CD4-positive, alpha-beta memory T cell (primary cell): ENCODE measurements at regions of chr15 and their contacts with region 1.

Region 1: DNA sequence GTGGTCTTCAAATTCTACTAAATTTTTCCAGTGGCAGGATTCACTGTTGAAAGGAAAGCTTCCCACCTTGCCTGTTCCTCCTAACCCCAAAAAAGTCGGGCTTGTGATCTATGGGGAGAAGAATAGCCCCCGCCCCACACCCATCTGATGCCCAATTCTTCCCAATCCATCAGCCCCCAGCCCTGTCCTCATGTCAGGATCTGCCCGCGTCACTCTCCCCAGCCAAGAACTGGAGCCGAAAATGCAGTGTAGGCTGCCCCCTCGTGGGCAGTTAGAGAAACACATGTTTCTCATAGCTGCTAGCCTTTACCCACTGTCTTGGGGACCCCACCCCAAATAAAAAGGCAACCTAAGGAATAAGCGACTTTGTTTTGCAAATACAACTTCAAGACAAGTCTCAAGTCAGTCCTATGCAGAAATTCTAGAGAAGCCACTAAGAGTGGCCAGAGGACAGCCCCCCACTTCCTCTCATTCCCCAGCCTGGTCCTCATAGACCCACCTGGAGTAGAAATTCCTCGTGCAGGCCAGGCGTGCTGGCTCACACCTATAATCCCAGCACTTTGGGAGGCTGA is 13.0 kb upstream of the CSK start:
- DNase-seq: peak; percentile 60 to 67 (median 60)
- H3K4me3 ChIP-seq: no peak overlapping the region
- H3K4me3 Mint-ChIP-seq: peak overlapping the region in 2 of 8 donors; percentile 0 to 30
- H3K27ac ChIP-seq: no peak overlapping the region
- H3K27ac Mint-ChIP-seq: peak overlapping the region in 4 of 7 donors; percentile 7 to 81 (median 19)
- H3K4me1 ChIP-seq: peaks cover 22% of the 10 kb centered on the region
- H3K4me1 Mint-ChIP-seq: peaks cover 8 to 36% (median 16%) of the 10 kb centered on the region in 4 donors
- H3K27me3 ChIP-seq: no peaks in the 10 kb centered on the region
- H3K27me3 Mint-ChIP-seq: peaks cover 3 to 4% of the 10 kb centered on the region in 2 donors

Region 2: DNA sequence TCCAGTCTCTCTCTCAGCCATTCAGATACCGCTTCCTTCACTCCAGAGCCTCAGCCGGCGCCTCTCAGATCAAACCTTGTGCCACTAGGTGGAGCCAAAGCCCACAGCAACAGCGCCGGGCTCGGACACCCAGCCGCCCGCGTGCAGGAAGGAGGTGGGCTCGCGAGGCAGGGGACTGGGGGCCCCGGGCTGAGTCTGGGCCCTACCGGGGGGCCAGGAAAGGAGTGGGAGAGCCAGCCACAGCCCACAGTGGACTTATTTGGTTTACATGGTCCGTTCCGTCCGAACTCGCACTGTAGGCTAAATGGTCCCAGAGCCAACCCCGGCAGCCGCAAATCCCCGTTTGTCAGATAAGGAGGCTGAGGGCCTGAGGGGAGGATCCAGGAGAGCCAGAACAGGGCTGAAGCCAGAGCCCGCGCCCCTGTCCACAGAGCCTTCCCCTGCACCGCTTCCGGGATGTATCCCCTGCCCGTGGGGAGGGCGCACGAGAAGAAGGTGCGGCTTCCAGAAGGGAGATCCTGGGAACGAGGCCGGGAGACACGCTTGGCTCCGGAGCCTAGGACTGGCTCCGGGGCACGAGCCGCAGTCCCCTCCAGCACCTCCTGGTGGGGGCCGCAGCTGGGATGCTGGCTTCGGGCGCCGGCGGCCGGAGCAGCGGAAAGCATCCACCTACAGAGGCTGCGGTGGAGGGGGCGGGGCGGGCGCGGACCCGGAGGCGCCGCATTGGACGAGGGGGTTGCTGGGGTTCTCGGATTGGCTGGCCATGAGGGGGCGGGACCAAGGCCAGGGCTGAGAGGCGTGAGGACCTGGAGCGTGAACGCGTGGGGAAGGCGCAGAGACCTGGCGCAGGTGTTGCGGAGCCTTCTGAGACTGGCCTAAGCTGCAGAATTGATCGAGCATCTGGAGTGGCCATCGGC is 394.9 kb before region 1 on chr15:
- CTCF ChIA-PET with region 1: interaction called, 4 read pairs
- POLR2A ChIA-PET with region 1: interaction called, 3 read pairs
- intact Hi-C with region 1: loop called (anchors 1 kb)
- DNase-seq: peak; percentile 90 to 96 (median 91)
- H3K4me3 ChIP-seq: peak overlapping the region; percentile 82 to 93
- H3K4me3 Mint-ChIP-seq: peak overlapping the region; percentile 78 to 88 (median 86)
- H3K27ac ChIP-seq: peak overlapping the region; percentile 38
- H3K27ac Mint-ChIP-seq: peak overlapping the region; percentile 46 to 88 (median 67)
- H3K4me1 ChIP-seq: peaks cover 19% of the 10 kb centered on the region
- H3K4me1 Mint-ChIP-seq: peaks cover 6 to 24% (median 13%) of the 10 kb centered on the region in 4 donors
- H3K27me3 ChIP-seq: no peaks in the 10 kb centered on the region
- H3K27me3 Mint-ChIP-seq: peaks cover 8% of the 10 kb centered on the region in 2 donors

Region 3: GRCh38 chr15:74573987-74574386 is 194.9 kb before region 1 on chr15:
- CTCF ChIA-PET with region 1: no interaction called
- POLR2A ChIA-PET with region 1: no interaction called
- intact Hi-C with region 1: no loop called
- DNase-seq: no peak
- H3K4me3 ChIP-seq: no peak overlapping the region
- H3K4me3 Mint-ChIP-seq: no peak overlapping the region
- H3K27ac ChIP-seq: no peak overlapping the region
- H3K27ac Mint-ChIP-seq: peak overlapping the region in 3 of 7 donors; percentile 39 to 87 (median 57)
- H3K4me1 ChIP-seq: no peaks in the 10 kb centered on the region
- H3K4me1 Mint-ChIP-seq: peaks cover 0 to 8% (median 2%) of the 10 kb centered on the region in 4 donors
- H3K27me3 ChIP-seq: no peaks in the 10 kb centered on the region
- H3K27me3 Mint-ChIP-seq: no peaks in the 10 kb centered on the region

Region 4: GRCh38 chr15:74732846-74733245 is 36.0 kb before region 1 on chr15:
- CTCF ChIA-PET with region 1: no interaction called
- POLR2A ChIA-PET with region 1: no interaction called
- intact Hi-C with region 1: no loop called
- DNase-seq: no peak
- H3K4me3 ChIP-seq: no peak overlapping the region
- H3K4me3 Mint-ChIP-seq: no peak overlapping the region
- H3K27ac ChIP-seq: no peak overlapping the region
- H3K27ac Mint-ChIP-seq: no peak overlapping the region
- H3K4me1 ChIP-seq: no peaks in the 10 kb centered on the region
- H3K4me1 Mint-ChIP-seq: no peaks in the 10 kb centered on the region
- H3K27me3 ChIP-seq: no peaks in the 10 kb centered on the region
- H3K27me3 Mint-ChIP-seq: peaks cover 8 to 38% of the 10 kb centered on the region in 2 donors

Region 5: DNA sequence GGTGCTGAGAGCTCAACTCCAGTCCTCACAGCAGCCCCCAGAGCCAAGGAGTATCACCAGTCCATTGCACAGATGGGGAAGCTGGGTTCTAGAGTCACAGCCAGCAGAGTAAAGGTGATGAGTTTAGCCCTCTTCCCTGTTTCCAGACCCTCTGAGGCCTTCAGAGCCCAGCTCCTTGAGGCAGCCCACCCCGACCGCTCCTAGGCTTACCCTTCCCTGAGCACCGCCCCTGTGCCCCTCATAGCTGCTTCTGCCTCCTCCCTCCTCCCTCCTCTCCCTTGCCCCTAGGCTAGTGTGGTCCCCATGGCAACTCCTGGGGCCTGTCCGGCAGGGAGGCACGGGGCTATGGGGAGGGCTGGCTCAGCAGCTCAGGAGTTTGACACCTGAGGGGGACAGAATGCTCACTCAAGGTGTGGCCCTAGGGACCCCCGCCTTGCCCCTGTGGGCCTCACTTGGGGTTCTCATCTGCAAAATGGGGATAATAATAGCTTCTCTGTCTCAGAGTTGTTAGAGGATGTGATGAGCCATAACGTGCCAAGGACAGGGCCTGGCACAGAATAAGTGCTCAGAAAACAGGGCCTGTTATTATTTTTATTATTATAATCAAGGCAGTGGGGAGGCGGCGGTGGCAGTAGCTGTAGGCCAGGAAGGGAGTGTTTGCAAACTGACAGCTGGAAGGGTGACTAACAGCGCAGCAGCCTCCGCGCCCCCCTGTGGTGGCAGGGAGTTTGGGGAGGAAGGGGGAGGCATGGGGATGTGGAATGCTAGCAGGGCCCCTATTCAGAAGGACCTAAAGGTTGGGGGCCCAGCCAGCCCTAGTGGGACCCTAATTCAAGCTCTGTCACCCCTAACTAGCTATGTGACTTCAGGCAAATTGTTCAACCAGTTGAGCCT is 24.5 kb after region 1 on chr15:
- CTCF ChIA-PET with region 1: interaction called, 1,908 read pairs
- POLR2A ChIA-PET with region 1: interaction called, 1,342 read pairs
- intact Hi-C with region 1: loop called (anchors 1 kb)
- DNase-seq: peak; percentile 70 to 83 (median 75)
- H3K4me3 ChIP-seq: peak overlapping the region; percentile 17 to 24
- H3K4me3 Mint-ChIP-seq: peak overlapping the region; percentile 6 to 96 (median 75)
- H3K27ac ChIP-seq: peak overlapping the region; percentile 56
- H3K27ac Mint-ChIP-seq: peak overlapping the region; percentile 80 to 95 (median 90)
- H3K4me1 ChIP-seq: peaks cover 99% of the 10 kb centered on the region
- H3K4me1 Mint-ChIP-seq: peaks cover 61 to 94% (median 77%) of the 10 kb centered on the region in 4 donors
- H3K27me3 ChIP-seq: no peaks in the 10 kb centered on the region
- H3K27me3 Mint-ChIP-seq: no peaks in the 10 kb centered on the region

Region 6: DNA sequence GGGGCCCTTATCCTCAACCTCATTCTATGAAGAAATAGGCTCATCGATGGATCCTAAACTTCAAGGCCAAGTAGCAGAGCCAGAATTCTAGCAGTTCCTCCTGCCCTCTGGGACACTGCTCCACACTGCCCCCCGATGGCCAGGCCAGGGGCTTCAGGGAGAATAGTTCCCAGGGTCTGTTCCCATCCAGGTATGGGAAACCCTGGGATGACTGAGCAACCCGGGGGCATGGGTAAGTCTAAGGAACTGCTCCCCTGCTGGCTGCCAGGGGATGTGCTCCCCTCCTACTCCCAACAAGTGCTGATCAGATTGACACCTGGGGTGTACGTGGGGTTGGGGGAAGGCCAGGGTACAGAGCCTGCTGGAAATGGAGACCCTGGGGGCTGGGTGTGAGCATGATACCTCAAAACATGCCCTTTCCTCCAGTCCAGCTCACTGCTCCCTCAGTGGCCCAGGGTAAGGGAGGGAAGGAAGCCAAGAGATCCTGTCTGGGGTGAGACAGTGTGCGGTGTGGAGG is 66.5 kb after region 1 on chr15:
- CTCF ChIA-PET with region 1: interaction called, 70 read pairs
- POLR2A ChIA-PET with region 1: interaction called, 4 read pairs
- intact Hi-C with region 1: loop called (anchors 2 kb)
- DNase-seq: peak in 3 of 5 donors; percentile 16 to 38 (median 24)
- H3K4me3 ChIP-seq: no peak overlapping the region
- H3K4me3 Mint-ChIP-seq: no peak overlapping the region
- H3K27ac ChIP-seq: no peak overlapping the region
- H3K27ac Mint-ChIP-seq: peak overlapping the region in 1 of 7 donors; percentile 5
- H3K4me1 ChIP-seq: no peaks in the 10 kb centered on the region
- H3K4me1 Mint-ChIP-seq: peaks cover 0 to 5% (median 3%) of the 10 kb centered on the region in 4 donors
- H3K27me3 ChIP-seq: no peaks in the 10 kb centered on the region
- H3K27me3 Mint-ChIP-seq: no peaks in the 10 kb centered on the region

Region 7: GRCh38 chr15:74950078-74951000 is 181.5 kb after region 1 on chr15:
- CTCF ChIA-PET with region 1: interaction called, 97 read pairs
- POLR2A ChIA-PET with region 1: interaction called, 5 read pairs
- intact Hi-C with region 1: loop called (anchors 1 kb)
- DNase-seq: peak; percentile 70 to 79 (median 75)
- H3K4me3 ChIP-seq: no peak overlapping the region
- H3K4me3 Mint-ChIP-seq: no peak overlapping the region
- H3K27ac ChIP-seq: no peak overlapping the region
- H3K27ac Mint-ChIP-seq: peak overlapping the region in 1 of 7 donors; percentile 1
- H3K4me1 ChIP-seq: peaks cover 6% of the 10 kb centered on the region
- H3K4me1 Mint-ChIP-seq: peaks cover under 1 to 11% (median 3%) of the 10 kb centered on the region in 4 donors
- H3K27me3 ChIP-seq: no peaks in the 10 kb centered on the region
- H3K27me3 Mint-ChIP-seq: peaks cover 2% of the 10 kb centered on the region in 2 donors